HCT116 (cell line): ENCODE measurements at regions of chr1 and their contacts with region 1.

Region 1: GRCh38 chr1:36397378-36398230 is at the start of gene LSM10:
- DNase-seq: peak; percentile 85
- ATAC-seq: peak; percentile 55
- H3K4me3 ChIP-seq: peak within 1 kb of the TSS; percentile 85 to 91
- H3K27ac ChIP-seq: peak within 1 kb of the TSS; percentile 74
- H3K4me1 ChIP-seq: peaks cover 32 to 49% of the 10 kb centered on the region in 2 experiments
- H3K27me3 ChIP-seq: no peaks in the 10 kb centered on the region
- CTCF ChIP-seq: no peak
- POLR2A ChIP-seq: peak; percentile 80
- RAD21 ChIP-seq: no peak
- total RNA-seq, gene LSM10: 49.5 TPM

Region 2: DNA sequence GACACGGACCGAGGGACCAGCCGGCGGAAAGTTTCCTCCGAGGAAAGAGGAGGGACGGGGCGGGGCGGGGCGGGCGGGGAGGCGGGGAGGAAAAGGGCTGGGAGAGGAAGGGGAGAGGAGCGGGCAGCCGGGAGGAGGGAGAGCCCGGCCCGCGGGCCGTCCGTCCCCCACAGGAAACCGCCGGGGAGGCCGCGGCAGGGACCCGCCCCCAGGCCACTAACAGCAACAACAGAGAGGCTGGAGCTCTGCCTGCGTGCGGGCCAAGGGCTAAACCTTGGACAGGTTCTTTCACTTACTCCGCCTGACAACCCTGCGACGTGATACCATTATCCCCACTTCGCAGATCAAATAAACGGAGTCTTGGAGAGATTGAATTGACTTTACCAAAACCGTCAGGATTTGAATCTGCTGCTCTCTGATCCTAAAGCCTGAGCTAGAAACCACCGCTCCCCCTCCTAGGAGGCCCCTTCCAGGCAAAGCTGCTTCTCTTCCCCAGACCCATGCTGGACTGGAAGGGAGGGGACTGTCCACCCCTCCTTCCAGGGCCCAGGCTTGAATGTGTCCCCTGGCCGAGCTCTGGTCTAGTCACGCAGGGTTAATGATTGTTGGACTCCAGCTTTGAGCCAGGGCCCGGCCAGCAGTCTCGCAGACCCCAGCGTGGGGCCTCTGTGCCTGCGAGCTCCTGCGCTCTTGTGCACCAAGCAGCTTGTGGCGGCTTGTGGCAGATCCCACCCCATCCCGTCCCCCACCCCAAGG is 73.8 kb before region 1 on chr1 and contains the start of gene EVA1B:
- CTCF ChIA-PET with region 1: no interaction called
- POLR2A ChIA-PET with region 1: interaction called, 12 read pairs
- RAD21 ChIA-PET with region 1: no interaction called
- intact Hi-C with region 1: no loop called
- DNase-seq: no peak
- ATAC-seq: peak; percentile 39
- H3K4me3 ChIP-seq: peak within 1 kb of the TSS; percentile 58 to 69
- H3K27ac ChIP-seq: peak within 1 kb of the TSS; percentile 89
- H3K4me1 ChIP-seq: peaks cover 24 to 67% of the 10 kb centered on the region in 2 experiments
- H3K27me3 ChIP-seq: no peaks in the 10 kb centered on the region
- CTCF ChIP-seq: no peak
- POLR2A ChIP-seq: no peak
- RAD21 ChIP-seq: no peak
- total RNA-seq, gene EVA1B: 25.1 TPM

Region 3: GRCh38 chr1:36385410-36386257 is 12.0 kb before region 1 on chr1 and contains the start of gene STK40:
- CTCF ChIA-PET with region 1: interaction called, 7 read pairs
- POLR2A ChIA-PET with region 1: interaction called, 219 read pairs
- RAD21 ChIA-PET with region 1: interaction called in 1 of 2 experiments, 3 read pairs
- intact Hi-C with region 1: loop called (anchors 1 kb)
- DNase-seq: peak; percentile 99
- ATAC-seq: peak; percentile 87
- H3K4me3 ChIP-seq: peak within 1 kb of the TSS; percentile 87 to 96
- H3K27ac ChIP-seq: peak within 1 kb of the TSS; percentile 89
- H3K4me1 ChIP-seq: peaks cover 16 to 32% of the 10 kb centered on the region in 2 experiments
- H3K27me3 ChIP-seq: no peaks in the 10 kb centered on the region
- CTCF ChIP-seq: no peak
- POLR2A ChIP-seq: no peak
- RAD21 ChIP-seq: no peak
- total RNA-seq, gene STK40: 33.9 TPM

Region 4: GRCh38 chr1:36411674-36412520 is 14.3 kb after region 1 on chr1:
- CTCF ChIA-PET with region 1: no interaction called
- POLR2A ChIA-PET with region 1: interaction called, 20 read pairs
- RAD21 ChIA-PET with region 1: no interaction called
- intact Hi-C with region 1: no loop called
- DNase-seq: no peak
- ATAC-seq: peak; percentile 82
- H3K4me3 ChIP-seq: no peak overlapping the region
- H3K27ac ChIP-seq: no peak overlapping the region
- H3K4me1 ChIP-seq: peaks cover 8 to 17% of the 10 kb centered on the region in 2 experiments
- H3K27me3 ChIP-seq: no peaks in the 10 kb centered on the region
- CTCF ChIP-seq: no peak
- POLR2A ChIP-seq: peak; percentile 39
- RAD21 ChIP-seq: no peak

Region 5: DNA sequence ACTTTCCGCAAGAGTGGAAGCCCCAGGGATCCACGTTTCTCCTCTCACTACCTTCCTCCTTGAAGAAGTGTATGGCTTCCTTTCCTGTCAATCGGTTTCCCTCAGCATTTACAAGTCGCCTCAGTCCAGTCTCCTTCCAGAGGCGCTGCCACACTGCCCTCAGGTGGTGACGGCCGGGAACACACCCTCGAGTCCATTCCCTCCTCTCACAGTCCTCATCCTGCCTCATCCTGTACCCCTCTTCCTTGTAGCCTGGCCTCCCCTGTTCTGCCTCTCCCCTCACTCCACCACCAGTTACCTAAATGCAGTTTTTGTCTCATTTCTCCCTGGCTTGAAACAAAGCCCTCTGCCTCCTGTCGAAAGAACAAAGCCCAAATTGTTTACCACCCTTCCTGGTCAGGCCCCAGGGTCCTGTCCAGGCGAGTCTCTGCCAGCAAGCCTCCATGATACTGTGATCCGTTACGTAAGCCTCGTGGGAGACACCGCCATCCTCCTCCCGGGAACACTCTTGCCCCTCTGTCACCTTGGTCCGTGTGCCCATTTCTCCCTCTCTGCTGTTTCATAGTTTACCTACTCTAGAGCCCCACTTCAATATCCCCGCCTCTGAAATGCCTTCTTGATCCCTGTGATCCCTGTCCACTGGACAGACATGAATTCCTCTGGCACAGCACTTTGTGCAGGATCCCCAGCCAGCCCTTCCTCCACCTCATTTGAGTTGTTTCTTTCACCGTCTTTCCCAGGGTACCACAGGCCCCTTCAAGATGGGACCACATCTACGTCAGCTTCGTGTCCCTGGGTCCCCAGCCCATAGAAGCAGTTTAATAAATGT is 23.4 kb after region 1 on chr1:
- CTCF ChIA-PET with region 1: interaction called, 7 read pairs
- POLR2A ChIA-PET with region 1: interaction called, 20 read pairs
- RAD21 ChIA-PET with region 1: no interaction called
- intact Hi-C with region 1: no loop called
- DNase-seq: peak; percentile 69
- ATAC-seq: peak; percentile 92
- H3K4me3 ChIP-seq: no peak overlapping the region
- H3K27ac ChIP-seq: no peak overlapping the region
- H3K4me1 ChIP-seq: peaks cover 6 to 27% of the 10 kb centered on the region in 2 experiments; a peak in 3 of 4 replicates
- H3K27me3 ChIP-seq: no peaks in the 10 kb centered on the region
- CTCF ChIP-seq: peak; percentile 89 to 94 (median 93)
- POLR2A ChIP-seq: no peak
- RAD21 ChIP-seq: peak; percentile 98